GM12878 (cell line): ENCODE measurements at regions of chr3 and their contacts with region 1.

Region 1: GRCh38 chr3:56251343-56251945 is 216.8 kb downstream of the ERC2 start:
- DNase-seq: peak; percentile 8
- ATAC-seq: peak; percentile 57; the same call in 2 of the 3 replicates
- H3K4me3 ChIP-seq: no peak overlapping the region
- H3K27ac ChIP-seq: no peak overlapping the region
- H3K4me1 ChIP-seq: no peaks in the 10 kb centered on the region
- H3K27me3 ChIP-seq: no peaks in the 10 kb centered on the region; a peak in 1 of 4 replicates
- CTCF ChIP-seq: peak; percentile 63 to 81 (median 75)
- EP300 ChIP-seq: no peak
- POLR2A ChIP-seq: no peak
- RAD21 ChIP-seq: peak; percentile 77

Region 2: GRCh38 chr3:54427941-54428871 is 1823.2 kb before region 1 on chr3:
- CTCF ChIA-PET with region 1: no interaction called
- POLR2A ChIA-PET with region 1: no interaction called
- RAD21 ChIA-PET with region 1: no interaction called
- SMC1A ChIA-PET with region 1: no interaction called
- in situ Hi-C with region 1: loop called (anchors 10 kb)
- intact Hi-C with region 1: no loop called
- DNase-seq: peak; percentile 7
- ATAC-seq: peak; percentile 71
- H3K4me3 ChIP-seq: no peak overlapping the region
- H3K27ac ChIP-seq: no peak overlapping the region
- H3K4me1 ChIP-seq: no peaks in the 10 kb centered on the region
- H3K27me3 ChIP-seq: no peaks in the 10 kb centered on the region; a peak in 1 of 4 replicates
- CTCF ChIP-seq: peak; percentile 76 to 86 (median 82)
- EP300 ChIP-seq: no peak
- POLR2A ChIP-seq: no peak
- RAD21 ChIP-seq: peak; percentile 79

Region 3: GRCh38 chr3:56219894-56220805 is 31.3 kb before region 1 on chr3:
- CTCF ChIA-PET with region 1: no interaction called
- POLR2A ChIA-PET with region 1: no interaction called
- RAD21 ChIA-PET with region 1: no interaction called
- SMC1A ChIA-PET with region 1: no interaction called
- in situ Hi-C with region 1: no loop called
- intact Hi-C with region 1: no loop called
- DNase-seq: no peak
- ATAC-seq: no peak
- H3K4me3 ChIP-seq: no peak overlapping the region
- H3K27ac ChIP-seq: no peak overlapping the region
- H3K4me1 ChIP-seq: no peaks in the 10 kb centered on the region
- H3K27me3 ChIP-seq: no peaks in the 10 kb centered on the region; a peak in 1 of 4 replicates
- CTCF ChIP-seq: no peak
- EP300 ChIP-seq: no peak
- POLR2A ChIP-seq: no peak
- RAD21 ChIP-seq: no peak

Region 4: DNA sequence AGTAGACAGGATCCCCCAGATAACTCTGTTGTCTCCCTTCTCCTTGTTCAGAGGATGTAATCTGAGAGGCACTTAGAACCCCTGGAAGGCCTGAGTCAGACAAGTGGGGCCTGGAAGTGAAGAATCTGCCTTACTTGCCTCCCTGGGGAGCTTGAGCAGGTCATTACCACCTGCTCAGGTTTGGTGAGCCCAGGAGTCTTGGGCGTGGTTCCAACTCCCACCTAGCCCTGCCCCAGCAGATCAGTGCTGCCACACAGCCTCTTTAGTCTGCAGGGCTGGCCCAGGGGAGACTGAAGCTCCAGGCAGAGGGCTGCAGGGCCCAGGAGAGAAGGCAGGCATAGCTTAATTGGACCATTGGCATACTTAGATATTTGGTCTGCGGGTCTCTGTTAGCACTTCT is 13.1 kb before region 1 on chr3:
- CTCF ChIA-PET with region 1: interaction called, 21 read pairs
- POLR2A ChIA-PET with region 1: no interaction called
- RAD21 ChIA-PET with region 1: interaction called, 7 read pairs
- SMC1A ChIA-PET with region 1: interaction called, 3 read pairs
- in situ Hi-C with region 1: no loop called
- intact Hi-C with region 1: no loop called
- DNase-seq: no peak
- ATAC-seq: no peak
- H3K4me3 ChIP-seq: no peak overlapping the region
- H3K27ac ChIP-seq: no peak overlapping the region
- H3K4me1 ChIP-seq: no peaks in the 10 kb centered on the region
- H3K27me3 ChIP-seq: no peaks in the 10 kb centered on the region; a peak in 2 of 4 replicates
- CTCF ChIP-seq: no peak
- EP300 ChIP-seq: no peak
- POLR2A ChIP-seq: no peak
- RAD21 ChIP-seq: no peak

Region 5: DNA sequence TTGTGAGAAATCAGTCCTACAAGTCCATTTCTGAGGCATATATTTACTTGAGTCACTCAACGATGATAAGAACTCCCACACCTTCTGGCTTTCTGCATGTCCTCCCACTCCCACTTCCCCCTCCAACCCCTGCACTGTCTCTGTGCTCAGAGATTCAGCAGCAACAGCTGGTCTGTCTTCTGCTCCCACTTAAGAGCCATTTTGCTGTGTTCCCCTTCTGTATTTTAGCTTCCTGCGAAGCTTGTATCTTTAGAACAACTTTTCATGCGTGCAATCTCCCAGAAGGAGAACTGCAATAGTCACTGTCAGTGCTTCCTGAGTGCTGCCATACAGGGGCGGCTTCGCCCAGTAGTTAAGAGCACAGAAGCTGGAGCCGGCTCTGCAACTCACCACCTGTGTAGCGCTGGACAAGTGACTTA is 719.0 kb after region 1 on chr3:
- CTCF ChIA-PET with region 1: no interaction called
- POLR2A ChIA-PET with region 1: no interaction called
- RAD21 ChIA-PET with region 1: no interaction called
- SMC1A ChIA-PET with region 1: no interaction called
- in situ Hi-C with region 1: no loop called
- intact Hi-C with region 1: no loop called
- DNase-seq: no peak
- ATAC-seq: peak; percentile 64
- H3K4me3 ChIP-seq: no peak overlapping the region
- H3K27ac ChIP-seq: no peak overlapping the region
- H3K4me1 ChIP-seq: peaks cover 4% of the 10 kb centered on the region; the same call in 1 of the 2 replicates
- H3K27me3 ChIP-seq: 0 out of 4 replicates have a peak, but pooled peaks cover 0 to 3% of the 10 kb centered on the region in 2 experiments
- CTCF ChIP-seq: no peak
- EP300 ChIP-seq: no peak
- POLR2A ChIP-seq: no peak
- RAD21 ChIP-seq: no peak